ENCODE measurements at regions of chr5 and their contacts with region 1.

Region 1: GRCh38 chr5:179974946-179975712 is 67.4 kb upstream of the TBC1D9B start:
- DNase-seq: peak; percentile 56 to 71
- H3K4me3 ChIP-seq: no peak overlapping the region
- H3K4me3 Mint-ChIP-seq: no peak overlapping the region
- H3K27ac Mint-ChIP-seq: no peak overlapping the region
- H3K4me1 ChIP-seq: no peaks in the 10 kb centered on the region
- H3K4me1 Mint-ChIP-seq: no peaks in the 10 kb centered on the region
- H3K27me3 ChIP-seq: no peaks in the 10 kb centered on the region
- H3K27me3 Mint-ChIP-seq: no peaks in the 10 kb centered on the region
- CTCF ChIP-seq: peak; percentile 44 to 68

Region 2: GRCh38 chr5:179866258-179867078 is 108.7 kb before region 1 on chr5:
- CTCF ChIA-PET with region 1: interaction called, 3 read pairs
- POLR2A ChIA-PET with region 1: no interaction called
- intact Hi-C with region 1: loop called (anchors 1 kb)
- DNase-seq: peak in 1 of 2 experiments; percentile 35
- H3K4me3 ChIP-seq: no peak overlapping the region
- H3K4me3 Mint-ChIP-seq: no peak overlapping the region
- H3K27ac Mint-ChIP-seq: no peak overlapping the region
- H3K4me1 ChIP-seq: no peaks in the 10 kb centered on the region
- H3K4me1 Mint-ChIP-seq: no peaks in the 10 kb centered on the region
- H3K27me3 ChIP-seq: no peaks in the 10 kb centered on the region
- H3K27me3 Mint-ChIP-seq: no peaks in the 10 kb centered on the region
- CTCF ChIP-seq: peak in 1 of 2 experiments; percentile 11

Region 3: DNA sequence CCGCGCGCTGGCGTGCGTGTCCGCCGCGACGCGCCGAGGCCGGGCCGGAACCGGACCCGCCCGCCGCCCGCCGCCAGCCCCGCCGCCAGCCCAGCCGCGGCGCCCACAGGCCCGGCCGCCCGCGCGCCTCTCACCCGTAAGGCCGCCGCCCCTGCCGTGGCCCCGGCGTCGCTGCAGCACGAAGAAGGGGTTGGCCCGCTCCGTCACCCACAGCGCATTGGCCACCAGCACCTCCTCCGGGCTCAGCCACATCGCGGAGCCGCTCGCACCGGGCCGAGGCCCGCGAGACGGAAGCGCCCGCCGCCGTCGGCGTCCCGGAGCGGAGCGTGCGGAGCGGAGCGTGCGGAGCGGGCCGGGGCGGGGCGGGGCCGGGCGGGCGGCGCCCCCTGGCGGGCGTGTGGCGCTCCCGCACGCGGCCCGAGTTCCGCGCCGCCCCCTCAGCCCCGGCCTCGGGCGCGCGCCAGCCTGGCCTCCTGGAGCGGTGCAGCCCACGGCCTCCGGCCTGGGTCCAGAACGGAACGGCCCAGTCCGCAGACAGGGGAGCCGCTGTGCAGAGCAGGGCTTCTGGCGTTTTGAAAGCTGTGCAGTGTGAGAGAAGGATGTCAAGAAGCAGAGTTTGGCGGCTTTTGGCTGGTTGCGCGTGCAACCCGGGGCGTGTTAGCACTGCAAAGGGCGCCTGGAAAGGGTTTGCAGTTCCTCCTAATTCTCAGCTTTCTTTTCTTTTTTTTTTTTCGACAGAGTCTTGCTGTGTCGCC is 67.4 kb before region 1 on chr5 and contains the start of gene TBC1D9B:
- CTCF ChIA-PET with region 1: no interaction called
- POLR2A ChIA-PET with region 1: no interaction called
- intact Hi-C with region 1: loop called (anchors 2 kb)
- DNase-seq: peak in 1 of 2 experiments; percentile 73
- H3K4me3 ChIP-seq: peak within 1 kb of the TSS; percentile 76
- H3K4me3 Mint-ChIP-seq: peak within 1 kb of the TSS; percentile 82
- H3K27ac Mint-ChIP-seq: peak within 1 kb of the TSS; percentile 80
- H3K4me1 ChIP-seq: peaks cover 4% of the 10 kb centered on the region; the same call in 1 of the 2 replicates
- H3K4me1 Mint-ChIP-seq: peaks cover 6% of the 10 kb centered on the region
- H3K27me3 ChIP-seq: no peaks in the 10 kb centered on the region
- H3K27me3 Mint-ChIP-seq: no peaks in the 10 kb centered on the region
- CTCF ChIP-seq: peak; percentile 2 to 40
- total RNA-seq, gene TBC1D9B: 106 and 107 TPM in 2 replicates

Region 4: DNA sequence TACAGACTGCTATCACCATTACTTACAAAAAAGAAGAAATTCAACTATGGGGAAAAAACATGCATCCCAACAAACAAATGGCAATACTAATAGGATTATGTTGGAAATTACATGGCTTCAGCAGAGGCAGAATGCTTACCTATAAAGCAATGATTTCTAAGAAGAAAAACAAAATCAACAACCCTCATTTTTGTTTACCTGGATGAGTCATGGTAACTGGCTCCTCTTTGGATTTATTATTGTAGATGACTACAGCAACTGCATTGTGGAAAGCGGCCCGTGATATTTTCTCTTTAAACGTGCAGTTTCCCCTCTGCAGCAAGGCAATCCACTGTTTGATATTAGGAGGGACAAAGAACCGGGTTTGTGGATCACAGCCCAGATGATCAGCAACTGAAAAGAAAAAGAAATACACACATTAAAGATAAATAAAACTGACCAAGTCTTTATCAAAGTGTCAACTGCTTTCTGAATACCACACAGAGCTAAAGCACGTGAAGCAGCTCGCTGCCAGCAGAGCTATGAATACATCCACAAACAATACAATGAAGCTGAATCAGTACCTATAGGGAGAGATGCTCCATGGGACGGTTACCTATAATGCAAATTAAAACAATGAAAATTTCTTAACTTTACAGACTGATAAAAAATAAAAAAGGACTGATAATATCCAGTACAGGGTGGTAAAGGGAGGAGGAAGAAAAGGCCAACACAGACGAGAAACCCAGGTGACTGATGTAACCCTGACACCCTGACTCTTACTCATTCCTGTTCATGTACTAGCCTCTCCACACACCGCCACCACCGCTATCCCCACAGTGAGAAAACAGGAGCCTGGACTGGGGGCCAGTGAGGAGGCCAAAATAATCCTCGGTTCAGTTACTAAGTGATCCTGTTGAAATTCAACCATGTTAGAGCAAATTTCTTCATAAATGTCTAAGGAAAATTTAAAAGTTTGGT is 65.4 kb after region 1 on chr5:
- CTCF ChIA-PET with region 1: no interaction called
- POLR2A ChIA-PET with region 1: no interaction called
- intact Hi-C with region 1: loop called (anchors 5 kb)
- DNase-seq: no peak
- H3K4me3 ChIP-seq: no peak overlapping the region
- H3K4me3 Mint-ChIP-seq: no peak overlapping the region
- H3K27ac Mint-ChIP-seq: no peak overlapping the region
- H3K4me1 ChIP-seq: no peaks in the 10 kb centered on the region
- H3K4me1 Mint-ChIP-seq: no peaks in the 10 kb centered on the region
- H3K27me3 ChIP-seq: no peaks in the 10 kb centered on the region
- H3K27me3 Mint-ChIP-seq: no peaks in the 10 kb centered on the region
- CTCF ChIP-seq: no peak

Measured in Caco-2 (cell line).